ENCODE measurements at regions of chr2 and their contacts with region 1.

Region 1: GRCh38 chr2:175126661-175127060 is 41.3 kb downstream of the ATF2 start:
- DNase-seq: no peak
- H3K4me3 ChIP-seq: no peak overlapping the region
- H3K27ac ChIP-seq: no peak overlapping the region
- H3K4me1 ChIP-seq: no peaks in the 10 kb centered on the region
- H3K27me3 ChIP-seq: no peaks in the 10 kb centered on the region
- CTCF ChIP-seq: no peak
- EP300 ChIP-seq: no peak
- RAD21 ChIP-seq: no peak

Region 2: GRCh38 chr2:175111200-175111657 is 15.4 kb before region 1 on chr2:
- CTCF ChIA-PET with region 1: interaction called, 16 read pairs
- POLR2A ChIA-PET with region 1: no interaction called
- DNase-seq: peak; percentile 51
- H3K4me3 ChIP-seq: no peak overlapping the region; a peak in 1 of 4 replicates
- H3K27ac ChIP-seq: peak overlapping the region; percentile 30 to 62; a peak in 3 of 4 replicates
- H3K4me1 ChIP-seq: peaks cover 0 to 5% of the 10 kb centered on the region in 2 experiments; a peak in 2 of 4 replicates
- H3K27me3 ChIP-seq: no peaks in the 10 kb centered on the region
- CTCF ChIP-seq: peak; percentile 76
- EP300 ChIP-seq: no peak
- RAD21 ChIP-seq: peak; percentile 75